ENCODE measurements at regions of chr5 and their contacts with region 1.

Region 1: DNA sequence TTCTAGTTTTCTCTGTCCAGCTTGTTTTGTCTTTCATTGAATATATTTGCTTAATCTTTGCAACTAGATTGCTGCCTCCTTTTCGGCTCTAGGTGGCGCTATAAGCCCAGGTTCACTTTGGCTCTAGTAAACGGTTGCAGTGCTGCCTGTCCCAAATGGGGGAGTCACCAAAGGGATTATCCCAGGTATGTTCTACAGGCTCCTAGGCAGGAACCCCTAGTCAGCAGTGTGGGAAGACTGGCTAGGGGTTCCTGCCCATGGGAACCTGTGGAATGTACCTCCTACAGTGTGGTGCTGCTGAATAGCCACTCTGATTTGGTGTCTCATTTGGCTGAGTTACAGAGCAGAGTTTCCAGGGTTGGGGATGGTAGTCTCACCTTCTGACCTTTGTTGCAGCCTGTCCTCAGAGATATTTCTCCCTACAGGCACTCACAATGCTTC is 85.2 kb downstream of the ARSB start:
- DNase-seq: peak; percentile 69
- H3K4me3 ChIP-seq: no peak overlapping the region
- H3K27ac ChIP-seq: no peak overlapping the region
- H3K4me1 ChIP-seq: no peaks in the 10 kb centered on the region
- H3K27me3 ChIP-seq: no peaks in the 10 kb centered on the region
- CTCF ChIP-seq: peak; percentile 78 to 82
- POLR2A ChIP-seq: no peak

Region 2: DNA sequence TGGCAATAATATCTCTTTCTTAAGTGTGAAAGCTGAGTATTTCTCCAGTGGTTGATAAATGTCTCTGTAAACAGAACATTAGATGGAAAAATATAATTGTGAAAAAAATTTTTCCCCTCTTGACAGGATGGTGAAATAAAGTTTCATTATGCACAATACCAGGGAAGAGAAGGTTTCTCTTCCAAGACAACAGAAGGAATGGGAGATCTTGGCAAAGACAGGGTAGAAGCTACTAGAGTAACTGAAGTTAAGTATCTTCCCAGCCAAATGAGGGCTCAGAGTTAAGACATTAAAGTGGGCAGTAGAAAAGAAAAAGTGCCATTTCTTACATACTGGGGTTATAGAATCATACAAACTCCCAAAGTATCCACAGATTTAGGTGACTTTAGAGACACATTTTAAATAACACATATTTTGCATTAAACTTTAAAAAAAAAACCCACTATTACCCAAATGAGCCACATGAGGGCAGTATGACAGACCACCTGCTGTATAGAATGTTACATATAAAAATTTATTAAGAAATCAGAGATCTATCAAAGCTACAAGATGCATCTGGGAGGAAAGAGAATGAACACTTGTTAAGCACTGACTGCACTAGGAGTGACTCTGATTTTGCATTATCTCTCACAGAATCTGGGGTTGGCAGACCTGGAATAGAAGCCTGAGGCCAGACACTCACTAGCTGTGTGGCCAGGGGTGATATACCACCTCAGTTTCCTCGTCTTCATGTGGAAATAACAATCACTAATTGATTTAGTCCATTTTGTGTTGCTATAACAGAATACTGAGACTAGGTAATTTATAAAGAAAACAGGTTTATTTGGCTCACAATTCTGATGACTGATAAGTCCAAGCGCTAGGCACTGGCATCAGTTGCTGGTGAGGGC is 13.4 kb before region 1 on chr5:
- CTCF ChIA-PET with region 1: interaction called, 38 read pairs
- POLR2A ChIA-PET with region 1: no interaction called
- dilution Hi-C with region 1: no loop called
- intact Hi-C with region 1: no loop called
- DNase-seq: peak; percentile 41
- H3K4me3 ChIP-seq: no peak overlapping the region
- H3K27ac ChIP-seq: no peak overlapping the region
- H3K4me1 ChIP-seq: no peaks in the 10 kb centered on the region
- H3K27me3 ChIP-seq: no peaks in the 10 kb centered on the region
- CTCF ChIP-seq: peak; percentile 37 to 51
- POLR2A ChIP-seq: no peak

Region 3: GRCh38 chr5:78930721-78931120 is 30.8 kb after region 1 on chr5:
- CTCF ChIA-PET with region 1: interaction called, 27 read pairs
- POLR2A ChIA-PET with region 1: no interaction called
- dilution Hi-C with region 1: no loop called
- intact Hi-C with region 1: no loop called
- DNase-seq: no peak
- H3K4me3 ChIP-seq: no peak overlapping the region
- H3K27ac ChIP-seq: no peak overlapping the region
- H3K4me1 ChIP-seq: peaks cover 3% of the 10 kb centered on the region
- H3K27me3 ChIP-seq: no peaks in the 10 kb centered on the region
- CTCF ChIP-seq: no peak
- POLR2A ChIP-seq: no peak

Region 4: DNA sequence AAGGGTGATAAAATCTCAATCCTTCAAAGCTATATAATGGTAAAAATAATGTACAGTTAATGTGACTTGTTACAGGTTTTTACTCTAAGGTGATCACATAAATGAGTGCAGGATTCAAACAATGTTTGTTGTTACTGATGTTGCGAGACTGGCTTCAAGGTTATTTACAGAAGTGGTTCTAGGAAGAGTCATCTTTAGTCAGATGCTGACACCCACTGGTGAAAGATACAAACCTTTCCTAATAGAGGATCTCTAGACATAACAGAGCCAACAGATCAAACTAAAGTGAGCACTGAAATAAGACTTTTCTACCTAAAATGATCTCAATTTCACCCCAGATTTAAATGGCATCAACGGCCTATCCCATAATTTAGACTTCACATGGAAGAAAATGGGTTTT is 64.9 kb after region 1 on chr5:
- CTCF ChIA-PET with region 1: interaction called, 133 read pairs
- POLR2A ChIA-PET with region 1: no interaction called
- dilution Hi-C with region 1: no loop called
- intact Hi-C with region 1: loop called (anchors 1 kb)
- DNase-seq: peak; percentile 79
- H3K4me3 ChIP-seq: no peak overlapping the region
- H3K27ac ChIP-seq: no peak overlapping the region
- H3K4me1 ChIP-seq: no peaks in the 10 kb centered on the region
- H3K27me3 ChIP-seq: no peaks in the 10 kb centered on the region
- CTCF ChIP-seq: peak in 1 of 2 donors; percentile 18
- POLR2A ChIP-seq: no peak

Region 5: DNA sequence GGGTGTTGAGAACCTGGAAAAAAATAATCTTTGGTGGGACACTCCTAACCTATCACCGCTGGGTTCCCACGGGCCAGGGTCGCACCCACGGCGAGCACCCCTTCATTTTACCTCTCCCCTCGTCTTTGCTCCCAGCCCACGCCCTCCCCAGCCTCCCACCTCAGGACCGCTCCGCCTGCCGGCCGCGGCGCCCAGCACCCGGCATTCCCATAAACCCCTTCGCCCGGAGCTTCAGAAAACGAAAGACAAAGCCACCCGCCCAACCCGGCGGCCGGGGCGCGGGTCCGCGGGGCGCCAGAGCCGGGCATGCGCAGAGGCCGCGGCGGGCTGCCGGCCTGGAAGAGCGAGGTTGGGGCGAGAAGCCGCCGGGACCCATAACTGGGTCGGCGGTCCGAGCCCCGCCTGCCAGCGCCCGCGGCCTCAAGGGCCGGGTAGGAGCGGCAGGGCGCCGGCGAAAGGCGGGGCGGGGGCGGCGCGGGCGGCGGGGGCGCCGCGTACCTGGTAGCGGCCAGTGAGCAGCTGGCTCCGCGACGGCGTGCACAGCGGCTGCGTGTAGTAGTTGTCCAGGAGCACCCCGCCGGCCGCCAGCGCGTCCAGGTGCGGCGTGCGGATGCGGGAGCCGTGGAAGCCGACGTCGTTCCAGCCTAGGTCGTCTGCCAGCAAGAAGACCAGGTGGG is 84.6 kb after region 1 on chr5:
- CTCF ChIA-PET with region 1: interaction called, 32 read pairs
- POLR2A ChIA-PET with region 1: no interaction called
- dilution Hi-C with region 1: no loop called
- intact Hi-C with region 1: no loop called
- DNase-seq: peak; percentile 87
- H3K4me3 ChIP-seq: peak overlapping the region; percentile 71 to 96 (median 80)
- H3K27ac ChIP-seq: peak overlapping the region; percentile 88
- H3K4me1 ChIP-seq: peaks cover 19% of the 10 kb centered on the region
- H3K27me3 ChIP-seq: no peaks in the 10 kb centered on the region
- CTCF ChIP-seq: peak in 1 of 2 donors; percentile 45
- POLR2A ChIP-seq: peak; percentile 6

Region 6: GRCh38 chr5:79464695-79465332 is 564.9 kb after region 1 on chr5:
- CTCF ChIA-PET with region 1: interaction called, 6 read pairs
- POLR2A ChIA-PET with region 1: no interaction called
- dilution Hi-C with region 1: no loop called
- intact Hi-C with region 1: loop called (anchors 1 kb)
- DNase-seq: peak; percentile 38
- H3K4me3 ChIP-seq: no peak overlapping the region
- H3K27ac ChIP-seq: no peak overlapping the region
- H3K4me1 ChIP-seq: no peaks in the 10 kb centered on the region
- H3K27me3 ChIP-seq: no peaks in the 10 kb centered on the region
- CTCF ChIP-seq: peak; percentile 32 to 43
- POLR2A ChIP-seq: no peak

Measured in endothelial cell of umbilical vein (primary cell).